ENCODE measurements at regions of chr9 and their contacts with region 1.

Region 1: GRCh38 chr9:70639853-70640814 is 225.7 kb upstream of the KLF9 start:
- DNase-seq: peak in 2 of 35 experiments; percentile 3 to 40
- ATAC-seq: no peak
- H3K4me3 ChIP-seq: no peak overlapping the region
- H3K4me3 Mint-ChIP-seq: no peak overlapping the region
- H3K27ac ChIP-seq: no peak overlapping the region
- H3K27ac Mint-ChIP-seq: no peak overlapping the region
- H3K4me1 ChIP-seq: no peaks in the 10 kb centered on the region
- H3K4me1 Mint-ChIP-seq: no peaks in the 10 kb centered on the region
- H3K27me3 ChIP-seq: no peaks in the 10 kb centered on the region
- H3K27me3 Mint-ChIP-seq: peaks cover 17 to 27% of the 10 kb centered on the region in 2 donors

Region 2: DNA sequence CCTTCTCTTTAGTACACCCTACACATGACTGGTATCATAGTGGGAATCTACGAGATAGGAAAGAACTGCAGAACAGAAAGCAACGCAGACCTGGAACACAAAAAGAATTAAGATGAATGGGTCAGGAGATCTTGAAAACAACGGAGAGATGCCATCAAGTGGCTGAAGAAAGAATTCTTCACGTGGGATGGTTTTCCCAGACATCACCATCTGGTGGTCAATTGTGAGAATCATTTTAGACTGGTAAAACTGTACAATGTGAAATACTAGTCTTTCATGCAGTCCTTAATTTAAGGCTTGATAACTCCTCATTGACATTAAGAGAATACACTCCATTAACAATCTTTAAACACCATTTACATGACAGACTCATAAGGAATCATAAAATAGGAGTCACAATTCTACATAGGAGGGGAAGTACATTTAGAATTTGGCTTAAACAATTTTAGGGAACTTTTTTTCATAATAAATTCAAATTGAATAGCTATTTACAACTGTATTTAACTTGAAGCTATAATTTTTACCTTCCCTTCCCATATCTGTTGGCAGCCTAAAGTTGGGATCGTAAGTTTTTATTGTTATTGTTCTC is 609.7 kb after region 1 on chr9:
- CTCF ChIA-PET with region 1: interaction called in 1 of 2 experiments, 16 read pairs
- POLR2A ChIA-PET with region 1: no interaction called
- DNase-seq: peak in 1 of 35 experiments; percentile 10
- ATAC-seq: no peak
- H3K4me3 ChIP-seq: no peak overlapping the region
- H3K4me3 Mint-ChIP-seq: no peak overlapping the region
- H3K27ac ChIP-seq: no peak overlapping the region
- H3K27ac Mint-ChIP-seq: no peak overlapping the region
- H3K4me1 ChIP-seq: no peaks in the 10 kb centered on the region
- H3K4me1 Mint-ChIP-seq: no peaks in the 10 kb centered on the region
- H3K27me3 ChIP-seq: no peaks in the 10 kb centered on the region
- H3K27me3 Mint-ChIP-seq: peaks cover 5 to 7% of the 10 kb centered on the region in 2 donors